ENCODE measurements at regions of chr10 and their contacts with region 1.

Region 1: DNA sequence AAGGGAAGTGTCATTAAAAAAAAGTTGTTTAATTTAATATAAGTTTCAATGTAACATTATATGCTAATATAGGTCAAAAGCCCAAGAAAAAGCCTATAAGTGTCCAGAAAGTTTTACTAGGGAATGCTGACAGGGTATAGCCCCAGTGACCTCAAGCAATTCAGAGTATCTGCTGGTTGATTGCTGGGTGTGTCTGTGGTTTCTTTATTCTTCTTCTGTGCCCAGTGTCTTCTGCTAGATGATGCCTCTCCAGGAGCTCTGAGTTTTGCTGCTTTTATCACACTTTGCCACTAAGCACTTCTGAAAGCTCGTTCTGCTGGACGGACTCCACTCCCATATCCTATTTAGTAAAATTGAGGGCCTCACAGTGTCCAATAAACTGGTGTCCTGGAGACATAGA is 212.2 kb upstream of the NRG3 start:
- DNase-seq: no peak
- ATAC-seq: no peak
- H3K4me3 ChIP-seq: no peak overlapping the region
- H3K27ac ChIP-seq: no peak overlapping the region
- H3K4me1 ChIP-seq: no peaks in the 10 kb centered on the region
- H3K27me3 ChIP-seq: no peaks in the 10 kb centered on the region
- CTCF ChIP-seq: no peak

Region 2: DNA sequence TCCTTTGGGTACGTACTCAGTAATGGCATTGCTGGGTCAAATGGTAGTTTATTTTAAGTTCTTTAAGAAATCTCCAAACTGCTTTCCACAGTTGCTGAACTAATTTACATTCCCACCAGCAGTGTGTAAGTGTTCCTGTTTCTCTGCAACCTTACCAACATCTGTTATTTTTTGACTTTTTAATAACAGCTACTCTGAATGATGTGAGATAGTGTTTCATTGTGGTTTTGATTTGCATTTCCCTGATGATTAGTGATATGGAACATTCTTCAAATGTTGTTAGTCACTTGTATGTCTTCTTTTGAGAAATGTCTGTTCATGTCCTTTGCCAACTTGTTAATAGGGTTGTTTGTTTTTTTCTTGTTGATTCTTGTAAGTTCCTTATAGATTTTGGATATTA is 566.3 kb before region 1 on chr10:
- CTCF ChIA-PET with region 1: interaction called, 10 read pairs
- POLR2A ChIA-PET with region 1: no interaction called
- in situ Hi-C with region 1: no loop called
- intact Hi-C with region 1: no loop called
- DNase-seq: no peak
- ATAC-seq: no peak
- H3K4me3 ChIP-seq: no peak overlapping the region
- H3K27ac ChIP-seq: no peak overlapping the region
- H3K4me1 ChIP-seq: no peaks in the 10 kb centered on the region
- H3K27me3 ChIP-seq: no peaks in the 10 kb centered on the region
- CTCF ChIP-seq: no peak

Measured in Panc1 (cell line).